RWPE1 (cell line): ENCODE measurements at regions of chr7 and their contacts with region 1.

Region 1: GRCh38 chr7:37208528-37208927 is 240.1 kb downstream of the ELMO1 start:
- DNase-seq: peak; percentile 41
- H3K27ac ChIP-seq: no peak overlapping the region
- CTCF ChIP-seq: peak; percentile 68

Region 2: DNA sequence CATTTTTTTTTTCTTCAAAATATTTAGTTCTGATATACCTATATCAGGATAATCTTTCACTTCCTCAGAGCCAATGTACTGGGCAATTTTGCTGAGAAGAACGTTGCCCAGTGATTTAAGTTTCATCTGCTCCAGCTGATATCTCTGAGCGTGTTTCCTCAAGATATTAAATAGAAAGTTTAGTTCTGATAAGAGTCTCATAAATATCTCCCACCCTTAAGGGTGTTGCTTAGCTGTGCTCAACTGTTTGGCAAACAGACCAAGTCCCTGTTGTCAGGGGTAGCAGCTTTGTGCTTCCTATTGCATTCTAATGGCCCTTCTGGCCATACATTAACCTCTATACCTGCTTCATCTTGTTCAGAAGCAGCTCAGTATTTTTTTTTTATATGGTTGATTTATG is 390.3 kb after region 1 on chr7:
- CTCF ChIA-PET with region 1: interaction called, 12 read pairs
- POLR2A ChIA-PET with region 1: no interaction called
- DNase-seq: no peak
- H3K27ac ChIP-seq: no peak overlapping the region
- CTCF ChIP-seq: no peak